Mammary epithelial cell (primary cell): ENCODE measurements at regions of chr9 and their contacts with region 1.

Region 1: GRCh38 chr9:75644649-75645048 is 245.8 kb upstream of the PCSK5 start:
- DNase-seq: no peak
- H3K4me3 ChIP-seq: no peak overlapping the region
- H3K27ac ChIP-seq: no peak overlapping the region
- H3K4me1 ChIP-seq: no peaks in the 10 kb centered on the region
- H3K27me3 ChIP-seq: no peaks in the 10 kb centered on the region
- CTCF ChIP-seq: no peak

Region 2: DNA sequence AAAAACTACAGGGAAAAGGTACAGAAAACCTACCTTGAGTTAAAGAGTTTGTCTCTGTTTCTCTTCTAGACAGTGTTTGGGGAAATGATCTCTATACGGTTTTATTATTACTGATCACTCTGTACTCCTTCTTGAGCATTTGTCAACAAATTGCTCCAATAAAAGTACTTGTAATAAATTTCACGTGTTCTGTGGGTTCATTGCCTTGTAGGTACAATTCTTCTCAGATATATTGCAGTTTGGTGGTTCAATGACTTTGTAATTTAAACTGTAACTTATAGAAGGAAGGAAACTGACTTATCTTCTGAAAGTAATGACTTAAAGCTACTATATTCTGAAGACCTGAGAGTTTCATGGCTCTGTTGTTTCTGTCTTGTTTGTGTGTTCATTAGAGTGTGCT is 74.1 kb before region 1 on chr9:
- CTCF ChIA-PET with region 1: no interaction called
- dilution Hi-C with region 1: no loop called
- in situ Hi-C with region 1: no loop called
- intact Hi-C with region 1: no loop called
- DNase-seq: no peak
- H3K4me3 ChIP-seq: no peak overlapping the region
- H3K27ac ChIP-seq: no peak overlapping the region
- H3K4me1 ChIP-seq: no peaks in the 10 kb centered on the region
- H3K27me3 ChIP-seq: no peaks in the 10 kb centered on the region
- CTCF ChIP-seq: no peak

Region 3: GRCh38 chr9:75612754-75613153 is 31.9 kb before region 1 on chr9:
- CTCF ChIA-PET with region 1: no interaction called
- dilution Hi-C with region 1: loop called (anchors 5 kb)
- in situ Hi-C with region 1: no loop called
- intact Hi-C with region 1: no loop called
- DNase-seq: no peak
- H3K4me3 ChIP-seq: no peak overlapping the region
- H3K27ac ChIP-seq: no peak overlapping the region
- H3K4me1 ChIP-seq: no peaks in the 10 kb centered on the region
- H3K27me3 ChIP-seq: no peaks in the 10 kb centered on the region
- CTCF ChIP-seq: no peak

Region 4: GRCh38 chr9:75699017-75699416 is 54.4 kb after region 1 on chr9:
- CTCF ChIA-PET with region 1: no interaction called
- dilution Hi-C with region 1: loop called (anchors 5 kb)
- in situ Hi-C with region 1: no loop called
- intact Hi-C with region 1: no loop called
- DNase-seq: no peak
- H3K4me3 ChIP-seq: no peak overlapping the region
- H3K27ac ChIP-seq: no peak overlapping the region
- H3K4me1 ChIP-seq: no peaks in the 10 kb centered on the region
- H3K27me3 ChIP-seq: no peaks in the 10 kb centered on the region
- CTCF ChIP-seq: no peak